Activated T-helper 1 cell treated with anti-CD3 and anti-CD28 coated beads, Interleukin-12 subunit alpha, Interleukin-12 subunit beta, Interleukin-2, Interleukin-4 antibody, amounts not matched to agents 30 ng/mL and 10 ng/mL and 1 ng/mL, durations not matched to agents 14 hours and 24 hours and 36 hours (primary cell): ENCODE measurements at regions of chr6 and their contacts with region 1.

Region 1: GRCh38 chr6:53348371-53349208 is at the start of gene ELOVL5:
- DNase-seq: peak; percentile 94
- H3K4me3 Mint-ChIP-seq: peak within 1 kb of the TSS; percentile 96
- H3K27ac Mint-ChIP-seq: peak within 1 kb of the TSS; percentile 93
- H3K4me1 Mint-ChIP-seq: peaks cover 48% of the 10 kb centered on the region
- H3K27me3 Mint-ChIP-seq: peaks cover 8% of the 10 kb centered on the region
- total RNA-seq, gene ELOVL5: 121 and 131 TPM in 2 replicates

Region 2: DNA sequence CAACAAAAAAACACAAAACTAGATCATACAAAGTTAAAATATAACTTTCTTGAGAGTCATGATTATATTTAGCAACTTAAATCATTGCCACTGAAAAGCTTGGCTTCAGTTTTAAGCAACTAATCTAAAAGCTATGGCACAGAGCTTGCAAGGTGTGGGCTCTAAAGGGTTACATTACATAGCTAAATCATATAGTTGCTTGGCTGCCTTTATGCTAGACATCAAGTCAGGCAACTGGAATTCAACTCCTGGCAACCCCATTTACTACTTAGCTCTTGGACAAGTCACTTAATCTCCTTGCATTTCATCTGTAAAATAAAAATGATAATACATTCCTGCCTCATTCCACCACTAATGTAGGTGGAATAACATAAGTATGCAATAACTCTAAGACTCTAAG is 159.0 kb before region 1 on chr6:
- intact Hi-C with region 1: loop called (anchors 5 kb)
- DNase-seq: no peak
- H3K4me3 Mint-ChIP-seq: no peak overlapping the region
- H3K27ac Mint-ChIP-seq: no peak overlapping the region
- H3K4me1 Mint-ChIP-seq: peaks cover 9% of the 10 kb centered on the region
- H3K27me3 Mint-ChIP-seq: no peaks in the 10 kb centered on the region

Region 3: GRCh38 chr6:53284901-53285300 is 63.7 kb before region 1 on chr6:
- intact Hi-C with region 1: loop called (anchors 2 kb)
- DNase-seq: no peak
- H3K4me3 Mint-ChIP-seq: no peak overlapping the region
- H3K27ac Mint-ChIP-seq: peak overlapping the region; percentile 31
- H3K4me1 Mint-ChIP-seq: peaks cover 30% of the 10 kb centered on the region
- H3K27me3 Mint-ChIP-seq: no peaks in the 10 kb centered on the region

Region 4: DNA sequence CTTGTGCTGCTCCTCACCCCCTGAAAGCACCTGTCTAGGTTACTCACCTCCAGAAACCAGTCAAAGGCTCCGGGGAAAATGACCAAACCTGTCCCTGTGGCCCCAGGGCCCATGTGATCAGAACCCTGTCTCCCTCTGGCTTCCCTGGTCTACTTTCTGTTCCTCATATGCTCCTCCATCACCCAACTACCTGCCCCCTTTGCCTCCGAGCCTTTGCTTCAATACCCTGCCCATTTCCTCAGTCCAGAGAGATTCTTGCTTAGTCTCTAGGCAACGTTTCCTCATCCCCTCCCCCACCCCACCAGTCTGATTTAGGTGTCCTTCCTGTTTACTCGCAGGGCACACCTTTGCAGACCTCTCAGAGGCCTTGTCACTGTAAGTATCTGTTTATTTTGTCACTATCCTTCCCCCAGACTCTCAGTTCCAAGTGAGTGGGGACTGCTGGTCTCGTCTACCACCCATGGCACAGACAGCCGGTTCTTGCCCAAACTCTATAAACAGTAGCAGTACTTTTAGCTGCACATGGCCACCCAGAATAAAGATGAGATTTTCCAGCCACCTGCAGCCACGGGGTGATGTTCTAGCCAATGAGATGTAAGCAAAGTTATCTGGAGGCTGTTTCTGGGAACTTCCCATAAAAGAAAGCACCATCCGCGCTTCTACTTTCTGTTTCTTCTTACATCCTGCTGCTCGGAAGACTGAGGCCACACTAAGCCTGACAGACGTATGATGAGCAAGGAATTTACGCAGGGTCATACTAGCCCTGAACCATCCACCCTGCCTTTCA is 13.2 kb before region 1 on chr6:
- intact Hi-C with region 1: loop called (anchors 1 kb)
- DNase-seq: peak; percentile 74
- H3K4me3 Mint-ChIP-seq: peak overlapping the region; percentile 78
- H3K27ac Mint-ChIP-seq: peak overlapping the region; percentile 96
- H3K4me1 Mint-ChIP-seq: peaks cover 89% of the 10 kb centered on the region
- H3K27me3 Mint-ChIP-seq: no peaks in the 10 kb centered on the region

Region 5: DNA sequence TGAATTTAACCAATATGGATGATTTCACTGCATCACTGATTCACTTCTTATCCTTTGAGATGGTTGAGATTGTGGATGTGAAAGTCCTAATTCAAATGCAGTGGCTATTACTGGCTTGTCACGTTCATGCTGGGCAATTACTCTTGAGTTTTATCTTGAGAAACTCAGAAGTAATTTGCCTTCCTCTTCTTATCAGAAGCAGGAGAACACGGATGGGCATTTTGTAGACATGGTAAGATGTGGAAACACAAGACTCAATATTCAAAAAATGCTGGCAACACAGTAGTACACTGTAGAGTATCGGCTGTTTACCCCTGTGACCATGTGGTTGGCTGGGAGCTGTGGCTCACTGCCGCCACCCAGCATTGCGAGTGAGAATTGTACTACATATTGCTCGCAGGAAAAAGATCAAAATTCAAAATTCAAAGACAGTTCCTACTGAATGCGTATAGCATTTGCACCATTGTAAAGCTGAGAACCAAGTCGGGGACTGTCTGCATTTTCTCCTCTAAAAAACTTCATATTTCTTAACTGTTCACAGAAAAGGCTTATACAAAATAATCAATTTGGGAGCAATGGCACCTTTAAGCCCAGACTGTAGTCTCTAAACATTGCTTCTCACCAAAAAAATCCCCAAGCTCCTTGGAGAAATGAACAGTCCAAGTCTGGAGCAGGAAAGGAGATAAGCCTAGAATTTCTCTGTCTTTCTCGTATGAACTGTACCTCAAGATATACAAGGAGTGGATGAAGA is 62.1 kb after region 1 on chr6:
- intact Hi-C with region 1: loop called (anchors 5 kb)
- DNase-seq: peak; percentile 32
- H3K4me3 Mint-ChIP-seq: no peak overlapping the region
- H3K27ac Mint-ChIP-seq: no peak overlapping the region
- H3K4me1 Mint-ChIP-seq: no peaks in the 10 kb centered on the region
- H3K27me3 Mint-ChIP-seq: peaks cover 2% of the 10 kb centered on the region